Left cardiac atrium (tissue), 4 donors: ENCODE measurements at regions of chr18 and their contacts with region 1.

Region 1: DNA sequence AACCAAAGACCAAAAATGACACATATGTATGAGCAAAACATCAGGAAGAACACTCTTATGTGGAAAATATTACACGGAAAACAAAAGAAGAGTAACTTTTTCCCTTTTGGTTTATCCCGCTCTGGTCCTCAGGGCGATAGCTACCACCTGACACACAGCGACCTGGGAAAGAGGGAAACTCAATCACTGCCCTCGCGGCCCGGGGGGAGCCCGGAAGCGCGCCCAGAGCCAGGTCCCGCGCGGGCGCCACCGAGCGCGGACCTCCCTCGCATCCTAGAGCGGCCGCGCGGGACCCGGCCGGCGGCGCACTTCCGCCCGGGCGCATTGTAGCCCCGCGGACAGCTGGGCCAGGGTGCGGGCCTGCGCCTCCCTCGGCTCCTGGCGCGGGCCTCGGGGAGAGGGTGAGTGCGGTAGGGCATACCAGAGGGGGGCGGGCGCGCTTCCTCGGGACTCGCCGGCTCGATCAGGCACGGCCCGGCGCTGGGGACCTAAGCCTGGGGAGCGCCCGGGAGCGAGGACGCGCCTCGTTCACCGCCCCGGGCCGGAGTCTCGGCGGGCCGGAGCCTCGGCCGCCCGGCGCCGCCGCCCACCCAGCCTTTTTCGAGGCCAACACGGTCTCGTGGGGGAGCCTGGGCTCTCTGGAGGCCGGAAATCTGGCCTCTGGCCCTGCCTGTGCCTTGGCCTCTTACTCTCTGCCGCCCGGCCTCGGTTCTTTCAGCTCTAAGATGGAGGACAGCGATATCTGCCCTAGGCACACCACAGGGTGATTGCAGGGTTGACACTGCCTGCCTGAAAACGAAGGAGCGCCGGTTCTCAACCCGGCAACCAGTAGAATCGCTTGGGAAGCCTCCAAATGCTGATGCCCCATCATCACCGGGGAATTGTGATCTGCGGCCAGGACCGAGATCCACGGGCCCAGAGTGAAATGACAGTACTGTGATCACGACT is at the start of gene ELAC1:
- DNase-seq: peak; percentile 82
- ATAC-seq: peak; percentile 98
- total RNA-seq, gene ELAC1: 4.3 to 5.3 TPM

Region 2: DNA sequence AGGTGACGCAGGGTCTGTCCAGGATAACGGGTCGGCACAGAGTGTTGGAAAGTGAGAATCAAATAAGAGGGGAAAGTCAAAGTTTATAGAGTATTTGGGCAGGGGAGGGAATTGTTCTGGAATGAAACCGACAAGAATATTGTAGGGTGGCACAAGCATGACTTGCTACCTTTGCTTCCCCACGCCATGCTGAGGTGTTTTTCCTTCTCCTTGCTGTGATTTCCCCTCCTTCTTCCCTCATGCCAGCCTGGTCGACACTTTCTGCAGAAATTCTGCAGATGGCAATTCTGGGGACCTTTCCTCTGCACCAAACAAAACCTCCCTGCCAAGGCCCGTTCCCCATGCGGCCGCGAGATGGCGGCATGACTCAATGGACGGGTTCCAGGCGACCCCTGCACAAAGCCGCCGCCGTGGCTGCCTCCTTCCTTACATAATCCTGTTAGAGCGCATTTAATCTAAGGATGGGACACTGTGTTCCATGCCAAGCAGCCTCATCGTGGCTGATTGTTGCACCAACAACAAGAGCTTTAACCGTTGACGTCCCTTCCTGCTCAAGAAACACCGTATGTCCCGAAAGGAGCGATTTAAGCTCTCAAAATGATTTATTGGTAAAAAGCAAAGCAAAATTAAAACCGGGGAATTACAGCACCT is 148.1 kb before region 1 on chr18 and contains the start of gene MRO:
- intact Hi-C with region 1: no loop called
- DNase-seq: peak; percentile 88
- ATAC-seq: peak; percentile 96
- total RNA-seq, gene MRO: 3.4 to 5.1 TPM

Region 3: GRCh38 chr18:50928551-50928950 is 39.4 kb before region 1 on chr18:
- intact Hi-C with region 1: no loop called
- DNase-seq: no peak
- ATAC-seq: no peak

Region 4: GRCh38 chr18:51029694-51030536 is 61.9 kb after region 1 on chr18 and contains the start of gene SMAD4:
- intact Hi-C with region 1: loop called in 1 of 2 experiments (anchors 5 kb)
- DNase-seq: peak; percentile 95
- ATAC-seq: peak; percentile 96 to 97
- total RNA-seq, gene SMAD4: 77.1 to 87.9 TPM